ENCODE measurements at regions of chr16 and their contacts with region 1.

Region 1: DNA sequence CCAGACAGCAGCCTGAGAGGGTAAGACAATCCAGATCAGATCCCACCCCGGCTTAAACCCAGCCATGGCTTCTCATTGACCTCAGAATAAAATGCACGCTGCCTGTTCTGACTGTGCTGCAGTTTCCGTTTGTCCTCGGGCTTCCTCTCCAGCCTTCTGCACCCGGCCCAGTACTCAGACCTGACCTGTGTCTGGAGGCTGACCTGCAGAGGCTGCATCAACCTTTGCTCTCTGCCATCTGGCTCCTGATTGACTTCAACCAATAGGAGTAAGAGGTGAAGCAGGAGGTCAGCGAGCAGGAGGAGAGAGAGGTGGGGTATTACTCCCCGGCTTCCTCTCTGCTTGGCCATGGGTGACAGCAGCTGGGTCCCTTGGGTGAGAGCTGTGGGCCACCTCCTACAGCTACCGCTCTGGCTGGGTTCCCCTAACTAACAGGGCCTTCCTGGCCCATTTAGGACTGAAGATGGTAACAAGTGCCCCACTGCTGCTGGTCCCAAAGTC is 46.7 kb downstream of the C16orf82 start:
- DNase-seq: no peak

Region 2: GRCh38 chr16:27264151-27264550 is 150.8 kb after region 1 on chr16:
- CTCF ChIA-PET with region 1: interaction called, 13 read pairs
- POLR2A ChIA-PET with region 1: no interaction called
- DNase-seq: no peak